Psoas muscle (tissue), 8 donors: ENCODE measurements at regions of chr15 and their contacts with region 1.

Region 1: GRCh38 chr15:45941367-45941766 is 306.5 kb downstream of the SQOR start:
- DNase-seq: no peak
- ATAC-seq: no peak
- H3K4me3 ChIP-seq: no peak overlapping the region
- H3K27ac ChIP-seq: no peak overlapping the region
- H3K4me1 ChIP-seq: no peaks in the 10 kb centered on the region
- H3K27me3 ChIP-seq: no peaks in the 10 kb centered on the region
- CTCF ChIP-seq: no peak

Region 2: GRCh38 chr15:45891766-45892165 is 49.6 kb before region 1 on chr15:
- intact Hi-C with region 1: loop called in 1 of 2 experiments (anchors 2 kb)
- DNase-seq: peak in 1 of 2 donors; percentile 51
- ATAC-seq: peak in 3 of 4 donors; percentile 84 to 95 (median 92)
- H3K4me3 ChIP-seq: no peak overlapping the region
- H3K27ac ChIP-seq: no peak overlapping the region
- H3K4me1 ChIP-seq: no peaks in the 10 kb centered on the region
- H3K27me3 ChIP-seq: no peaks in the 10 kb centered on the region
- CTCF ChIP-seq: no peak